ENCODE measurements at regions of chr2 and their contacts with region 1.

Region 1: GRCh38 chr2:165428926-165429325 is 40.6 kb upstream of the CSRNP3 start:
- DNase-seq: peak; percentile 52
- ATAC-seq: no peak; the same call in 1 of the 2 replicates
- H3K4me3 ChIP-seq: no peak overlapping the region
- H3K27ac ChIP-seq: peak overlapping the region; percentile 68
- H3K4me1 ChIP-seq: peaks cover 14% of the 10 kb centered on the region
- H3K27me3 ChIP-seq: no peaks in the 10 kb centered on the region
- CTCF ChIP-seq: no peak

Region 2: GRCh38 chr2:165357758-165358157 is 71.2 kb before region 1 on chr2:
- CTCF ChIA-PET with region 1: no interaction called
- POLR2A ChIA-PET with region 1: no interaction called
- intact Hi-C with region 1: no loop called
- DNase-seq: peak; percentile 83
- ATAC-seq: peak; percentile 98
- H3K4me3 ChIP-seq: no peak overlapping the region
- H3K27ac ChIP-seq: no peak overlapping the region
- H3K4me1 ChIP-seq: peaks cover 12% of the 10 kb centered on the region
- H3K27me3 ChIP-seq: no peaks in the 10 kb centered on the region
- CTCF ChIP-seq: no peak

Region 3: GRCh38 chr2:165469417-165469816 is 40.5 kb after region 1 on chr2 and contains the start of gene CSRNP3:
- CTCF ChIA-PET with region 1: no interaction called
- POLR2A ChIA-PET with region 1: no interaction called
- intact Hi-C with region 1: loop called (anchors 2 kb)
- DNase-seq: peak; percentile 97
- ATAC-seq: peak; percentile 100
- H3K4me3 ChIP-seq: peak within 1 kb of the TSS; percentile 73
- H3K27ac ChIP-seq: no peak within 1 kb of the TSS
- H3K4me1 ChIP-seq: peaks cover 24% of the 10 kb centered on the region; the same call in 1 of the 2 replicates
- H3K27me3 ChIP-seq: no peaks in the 10 kb centered on the region
- CTCF ChIP-seq: no peak
- total RNA-seq, gene CSRNP3: 2.2 and 8.3 TPM in 2 replicates

Measured in PC-3 (cell line).